ENCODE measurements at regions of chr6 and their contacts with region 1.

Region 1: GRCh38 chr6:145028144-145028818 is 707.0 kb downstream of the EPM2A start:
- DNase-seq: peak; percentile 28
- H3K4me3 Mint-ChIP-seq: no peak overlapping the region
- H3K27ac Mint-ChIP-seq: no peak overlapping the region
- H3K4me1 Mint-ChIP-seq: peaks cover 8% of the 10 kb centered on the region
- H3K27me3 Mint-ChIP-seq: no peaks in the 10 kb centered on the region
- CTCF ChIP-seq: no peak

Region 2: GRCh38 chr6:144659202-144660182 is 368.8 kb before region 1 on chr6:
- CTCF ChIA-PET with region 1: no interaction called
- intact Hi-C with region 1: loop called (anchors 10 kb)
- DNase-seq: peak; percentile 25
- H3K4me3 Mint-ChIP-seq: peak overlapping the region; percentile 17
- H3K27ac Mint-ChIP-seq: peak overlapping the region; percentile 42
- H3K4me1 Mint-ChIP-seq: peaks cover 60% of the 10 kb centered on the region
- H3K27me3 Mint-ChIP-seq: no peaks in the 10 kb centered on the region
- CTCF ChIP-seq: no peak

Region 3: DNA sequence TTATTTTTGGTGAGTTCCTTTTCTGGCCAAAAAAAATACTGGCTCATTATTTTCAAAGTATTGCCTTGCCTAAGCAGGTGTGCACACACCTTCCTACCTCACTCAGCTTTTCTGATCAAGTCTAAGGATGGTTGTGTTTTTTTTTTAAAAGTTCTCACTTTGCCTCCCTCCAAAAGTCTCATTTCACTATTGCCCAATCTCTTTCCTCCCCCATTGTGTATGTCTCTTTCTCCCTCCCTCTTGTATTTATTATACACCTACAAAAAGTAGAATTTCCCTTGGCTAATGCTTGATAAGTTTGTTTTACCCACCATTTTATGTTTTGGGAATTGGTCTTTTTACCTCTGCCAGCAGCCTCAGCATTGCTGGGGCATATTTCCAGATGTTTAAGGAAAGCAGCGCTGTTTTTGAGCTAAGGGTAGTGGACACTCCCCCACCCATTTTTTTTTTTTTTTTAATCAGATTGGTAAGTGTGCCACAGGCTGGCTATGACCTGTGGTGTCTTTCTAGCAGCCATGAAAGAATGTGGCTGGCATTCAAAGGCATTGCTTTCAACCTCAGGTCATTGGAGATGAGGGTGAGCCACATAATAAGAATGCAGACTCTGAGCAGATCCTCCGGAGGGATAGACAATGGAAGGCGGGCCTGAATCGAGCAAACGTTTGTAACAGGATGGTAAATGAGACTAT is 74.6 kb before region 1 on chr6:
- CTCF ChIA-PET with region 1: no interaction called
- intact Hi-C with region 1: loop called (anchors 5 kb)
- DNase-seq: peak; percentile 4
- H3K4me3 Mint-ChIP-seq: no peak overlapping the region
- H3K27ac Mint-ChIP-seq: no peak overlapping the region
- H3K4me1 Mint-ChIP-seq: peaks cover 11% of the 10 kb centered on the region
- H3K27me3 Mint-ChIP-seq: no peaks in the 10 kb centered on the region
- CTCF ChIP-seq: no peak

Measured in Calu3 (cell line).